ENCODE measurements at regions of chr4 and their contacts with region 1.

Region 1: GRCh38 chr4:151276787-151277562 is at the start of gene PRSS48:
- DNase-seq: peak; percentile 73
- H3K4me3 Mint-ChIP-seq: no peak within 1 kb of the TSS
- H3K27ac Mint-ChIP-seq: no peak within 1 kb of the TSS
- H3K4me1 Mint-ChIP-seq: no peaks in the 10 kb centered on the region
- H3K27me3 Mint-ChIP-seq: no peaks in the 10 kb centered on the region
- CTCF ChIP-seq: peak; percentile 74
- total RNA-seq, gene PRSS48: not detected in 2 replicates

Region 2: GRCh38 chr4:151250706-151251105 is 26.3 kb before region 1 on chr4:
- CTCF ChIA-PET with region 1: no interaction called
- intact Hi-C with region 1: loop called (anchors 2 kb)
- DNase-seq: no peak
- H3K4me3 Mint-ChIP-seq: no peak overlapping the region
- H3K27ac Mint-ChIP-seq: no peak overlapping the region
- H3K4me1 Mint-ChIP-seq: no peaks in the 10 kb centered on the region
- H3K27me3 Mint-ChIP-seq: no peaks in the 10 kb centered on the region
- CTCF ChIP-seq: no peak

Measured in Calu3 (cell line).